Esophagus muscularis mucosa (tissue), 4 donors: ENCODE measurements at regions of chr1 and their contacts with region 1.

Region 1: GRCh38 chr1:179807731-179808485 is 64.8 kb downstream of the FAM163A start:
- DNase-seq: no peak
- H3K4me3 ChIP-seq: no peak overlapping the region
- H3K27ac ChIP-seq: no peak overlapping the region
- H3K4me1 ChIP-seq: peaks cover 0 to 8% (median 4%) of the 10 kb centered on the region in 4 donors
- H3K27me3 ChIP-seq: peaks cover 0 to 7% (median 0%) of the 10 kb centered on the region in 4 donors
- CTCF ChIP-seq: no peak
- EP300 ChIP-seq: no peak
- POLR2A ChIP-seq: no peak

Region 2: GRCh38 chr1:179706339-179706941 is 101.5 kb before region 1 on chr1:
- intact Hi-C with region 1: loop called (anchors 1 kb)
- DNase-seq: no peak
- H3K4me3 ChIP-seq: no peak overlapping the region
- H3K27ac ChIP-seq: no peak overlapping the region
- H3K4me1 ChIP-seq: peaks cover 9 to 14% (median 12%) of the 10 kb centered on the region in 4 donors
- H3K27me3 ChIP-seq: no peaks in the 10 kb centered on the region
- CTCF ChIP-seq: peak; percentile 67 to 71 (median 70)
- EP300 ChIP-seq: no peak
- POLR2A ChIP-seq: no peak

Region 3: DNA sequence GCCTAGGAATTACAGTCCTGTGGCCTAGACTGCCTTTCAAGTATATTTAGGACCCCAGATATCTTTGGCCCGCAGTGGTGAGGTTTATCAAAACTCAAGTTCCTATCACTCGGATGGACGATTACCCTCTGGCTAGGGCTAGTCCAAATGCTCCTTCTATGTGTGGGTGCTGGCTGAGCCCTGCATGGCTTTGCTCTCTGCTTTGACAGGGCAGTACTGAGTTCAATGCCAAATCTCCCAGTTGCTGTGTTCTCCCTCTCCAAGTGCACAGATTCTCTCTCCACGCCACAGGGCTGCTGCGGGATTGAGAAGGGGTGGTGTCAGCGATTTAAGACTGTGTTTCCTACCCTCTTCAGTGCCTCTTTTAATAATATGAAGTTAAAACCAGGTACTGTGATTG is 519.2 kb after region 1 on chr1:
- intact Hi-C with region 1: no loop called
- DNase-seq: no peak
- H3K4me3 ChIP-seq: no peak overlapping the region
- H3K27ac ChIP-seq: no peak overlapping the region
- H3K4me1 ChIP-seq: no peaks in the 10 kb centered on the region
- H3K27me3 ChIP-seq: no peaks in the 10 kb centered on the region
- CTCF ChIP-seq: no peak
- EP300 ChIP-seq: no peak
- POLR2A ChIP-seq: no peak